Right cardiac atrium (tissue), 5 donors: ENCODE measurements at regions of chr6 and their contacts with region 1.

Region 1: GRCh38 chr6:7414811-7415210 is 25.2 kb downstream of the RIOK1 start:
- DNase-seq: no peak
- ATAC-seq: no peak
- H3K4me3 ChIP-seq: no peak overlapping the region
- H3K27ac ChIP-seq: no peak overlapping the region
- H3K4me1 ChIP-seq: no peaks in the 10 kb centered on the region
- H3K27me3 ChIP-seq: no peaks in the 10 kb centered on the region

Region 2: DNA sequence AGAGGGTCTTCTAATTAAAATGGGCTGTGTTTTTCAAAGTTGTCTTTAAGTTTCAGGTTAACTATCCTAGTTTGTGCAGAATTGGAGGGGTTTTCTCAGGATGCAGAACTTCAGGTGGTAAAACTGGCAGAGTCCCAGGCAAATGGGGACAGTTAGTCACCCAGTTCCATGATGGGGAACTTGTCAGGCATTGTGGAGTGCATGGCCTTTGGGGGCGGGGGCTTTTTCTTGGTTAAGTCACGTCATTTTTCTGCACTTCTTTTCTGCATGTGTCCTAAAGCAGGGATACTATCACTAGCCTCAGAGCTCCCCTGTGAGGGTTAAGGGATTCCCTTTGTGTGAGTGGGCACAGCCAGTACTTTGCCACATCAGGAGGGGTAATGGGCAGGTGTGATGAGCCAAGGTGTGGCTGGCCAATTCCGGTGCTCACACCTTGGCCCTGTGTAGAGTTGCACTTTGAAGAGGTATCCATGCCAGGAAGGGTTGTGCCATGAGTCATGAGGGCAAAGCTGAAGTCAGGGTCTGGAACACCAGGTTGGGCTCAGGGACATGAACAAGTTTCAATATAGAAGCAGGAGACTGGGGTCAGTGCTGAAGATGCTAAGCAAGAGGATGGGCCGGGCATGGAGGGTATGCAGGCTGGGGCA is 433.0 kb before region 1 on chr6:
- intact Hi-C with region 1: no loop called
- DNase-seq: no peak
- ATAC-seq: no peak
- H3K4me3 ChIP-seq: no peak overlapping the region
- H3K27ac ChIP-seq: no peak overlapping the region
- H3K4me1 ChIP-seq: no peaks in the 10 kb centered on the region
- H3K27me3 ChIP-seq: no peaks in the 10 kb centered on the region

Region 3: DNA sequence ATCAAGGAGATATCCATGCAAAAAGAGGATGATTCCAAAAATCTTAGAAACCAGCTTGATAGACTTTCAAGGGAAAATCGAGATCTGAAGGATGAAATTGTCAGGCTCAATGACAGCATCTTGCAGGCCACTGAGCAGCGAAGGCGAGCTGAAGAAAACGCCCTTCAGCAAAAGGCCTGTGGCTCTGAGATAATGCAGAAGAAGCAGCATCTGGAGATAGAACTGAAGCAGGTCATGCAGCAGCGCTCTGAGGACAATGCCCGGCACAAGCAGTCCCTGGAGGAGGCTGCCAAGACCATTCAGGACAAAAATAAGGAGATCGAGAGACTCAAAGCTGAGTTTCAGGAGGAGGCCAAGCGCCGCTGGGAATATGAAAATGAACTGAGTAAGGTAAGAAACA is 165.0 kb after region 1 on chr6:
- intact Hi-C with region 1: loop called in 2 of 4 experiments (anchors 10 kb)
- DNase-seq: no peak
- ATAC-seq: no peak
- H3K4me3 ChIP-seq: no peak overlapping the region
- H3K27ac ChIP-seq: no peak overlapping the region
- H3K4me1 ChIP-seq: no peaks in the 10 kb centered on the region
- H3K27me3 ChIP-seq: no peaks in the 10 kb centered on the region

Region 4: GRCh38 chr6:7750197-7750596 is 335.4 kb after region 1 on chr6:
- intact Hi-C with region 1: no loop called
- DNase-seq: no peak
- ATAC-seq: peak; percentile 19 to 39
- H3K4me3 ChIP-seq: no peak overlapping the region
- H3K27ac ChIP-seq: no peak overlapping the region
- H3K4me1 ChIP-seq: no peaks in the 10 kb centered on the region
- H3K27me3 ChIP-seq: no peaks in the 10 kb centered on the region